Activated CD8-positive, alpha-beta T cell treated with anti-CD3 and anti-CD28 coated beads, Interleukin-2, amount 10 ng/mL, durations not matched to agents 7 days and 5 days (primary cell): ENCODE measurements at regions of chr4 and their contacts with region 1.

Region 1: DNA sequence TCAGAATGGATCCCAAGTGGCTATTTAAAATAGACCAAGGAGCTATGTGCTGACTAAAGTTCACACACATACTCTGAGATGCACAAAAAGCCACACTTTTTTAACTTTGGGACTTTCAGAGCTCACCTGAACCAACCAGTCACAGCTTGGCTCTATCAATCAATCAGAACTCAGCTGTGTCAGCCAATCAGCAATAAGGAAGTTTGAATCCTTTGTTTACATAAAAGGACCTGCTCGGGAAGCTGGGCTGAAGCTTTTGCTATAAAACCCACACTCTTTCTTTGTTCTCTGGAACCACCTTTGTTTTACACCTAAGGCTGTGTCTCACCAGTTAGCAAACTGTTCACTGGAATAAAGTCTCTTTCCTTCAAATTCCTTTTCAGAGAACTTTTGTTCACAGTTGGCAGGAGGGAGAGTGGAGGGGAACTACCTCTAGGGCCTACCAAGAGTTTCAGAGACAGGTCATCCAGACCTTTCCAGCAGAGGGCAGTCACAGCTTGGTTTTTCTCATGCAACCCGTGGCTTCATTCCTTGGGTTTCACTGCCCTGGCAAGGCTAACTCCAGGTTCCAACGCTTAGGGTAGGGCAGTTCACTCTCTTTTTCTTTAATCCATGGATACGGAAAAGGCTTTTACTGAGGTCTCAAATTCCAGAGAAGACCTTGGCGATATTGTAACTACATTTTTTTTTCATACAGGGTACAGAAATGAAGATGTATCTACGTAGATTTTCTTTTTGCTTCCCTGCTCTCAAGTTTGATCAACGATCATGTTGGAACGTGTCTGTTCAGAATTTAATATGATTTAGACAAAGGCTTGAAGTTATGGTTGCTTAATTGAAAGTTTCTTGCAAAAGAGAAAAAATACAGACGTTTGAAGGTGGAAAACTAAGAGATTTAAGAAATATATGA is 80.7 kb downstream of the GPRIN3 start:
- DNase-seq: peak; percentile 87
- ATAC-seq: peak; percentile 95
- H3K4me3 Mint-ChIP-seq: no peak overlapping the region
- H3K27ac Mint-ChIP-seq: peak overlapping the region; percentile 24
- H3K4me1 Mint-ChIP-seq: peaks cover 15% of the 10 kb centered on the region
- H3K27me3 Mint-ChIP-seq: no peaks in the 10 kb centered on the region

Region 2: GRCh38 chr4:89142691-89143669 is 83.9 kb before region 1 on chr4:
- CTCF ChIA-PET with region 1: no interaction called
- POLR2A ChIA-PET with region 1: no interaction called
- DNase-seq: no peak
- ATAC-seq: no peak
- H3K4me3 Mint-ChIP-seq: no peak overlapping the region
- H3K27ac Mint-ChIP-seq: no peak overlapping the region
- H3K4me1 Mint-ChIP-seq: no peaks in the 10 kb centered on the region
- H3K27me3 Mint-ChIP-seq: peaks cover 6% of the 10 kb centered on the region

Region 3: GRCh38 chr4:89216866-89217265 is 10.1 kb before region 1 on chr4:
- CTCF ChIA-PET with region 1: interaction called, 11 read pairs
- POLR2A ChIA-PET with region 1: no interaction called
- DNase-seq: no peak
- ATAC-seq: no peak
- H3K4me3 Mint-ChIP-seq: no peak overlapping the region
- H3K27ac Mint-ChIP-seq: no peak overlapping the region
- H3K4me1 Mint-ChIP-seq: peaks cover under 1% of the 10 kb centered on the region
- H3K27me3 Mint-ChIP-seq: peaks cover 7% of the 10 kb centered on the region

Region 4: GRCh38 chr4:89294573-89295269 is 67.8 kb after region 1 on chr4:
- CTCF ChIA-PET with region 1: interaction called, 22 read pairs
- POLR2A ChIA-PET with region 1: no interaction called
- DNase-seq: peak; percentile 47
- ATAC-seq: peak; percentile 67
- H3K4me3 Mint-ChIP-seq: peak overlapping the region; percentile 60
- H3K27ac Mint-ChIP-seq: peak overlapping the region; percentile 96
- H3K4me1 Mint-ChIP-seq: peaks cover 91% of the 10 kb centered on the region
- H3K27me3 Mint-ChIP-seq: no peaks in the 10 kb centered on the region

Region 5: GRCh38 chr4:89434364-89434988 is 207.6 kb after region 1 on chr4:
- CTCF ChIA-PET with region 1: interaction called, 80 read pairs
- POLR2A ChIA-PET with region 1: interaction called, 3 read pairs
- DNase-seq: no peak
- ATAC-seq: peak; percentile 70
- H3K4me3 Mint-ChIP-seq: no peak overlapping the region
- H3K27ac Mint-ChIP-seq: no peak overlapping the region
- H3K4me1 Mint-ChIP-seq: peaks cover 13% of the 10 kb centered on the region
- H3K27me3 Mint-ChIP-seq: peaks cover 2% of the 10 kb centered on the region

Region 6: DNA sequence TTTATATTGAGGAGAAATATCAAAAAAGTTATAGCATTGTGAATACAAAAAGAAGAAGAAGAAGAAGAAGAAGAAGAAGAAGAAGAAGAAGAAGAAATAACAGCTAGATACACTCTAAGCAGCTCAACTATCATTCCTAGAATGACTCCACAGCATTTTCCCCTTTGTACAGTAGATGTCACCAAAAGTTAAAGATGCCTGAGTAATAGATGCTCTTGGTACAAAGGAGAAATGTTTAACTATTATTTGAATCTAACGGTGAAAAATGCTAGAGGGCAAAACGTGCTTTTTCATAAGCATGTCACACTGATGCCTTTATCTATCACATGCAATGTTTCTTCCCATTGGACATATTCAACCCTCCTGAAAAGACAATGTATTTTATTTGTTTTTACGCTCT is 259.1 kb after region 1 on chr4:
- CTCF ChIA-PET with region 1: interaction called, 14 read pairs
- POLR2A ChIA-PET with region 1: no interaction called
- DNase-seq: no peak
- ATAC-seq: no peak
- H3K4me3 Mint-ChIP-seq: no peak overlapping the region
- H3K27ac Mint-ChIP-seq: no peak overlapping the region
- H3K4me1 Mint-ChIP-seq: no peaks in the 10 kb centered on the region
- H3K27me3 Mint-ChIP-seq: peaks cover 5% of the 10 kb centered on the region